ENCODE measurements at regions of chr20 and their contacts with region 1.

Region 1: DNA sequence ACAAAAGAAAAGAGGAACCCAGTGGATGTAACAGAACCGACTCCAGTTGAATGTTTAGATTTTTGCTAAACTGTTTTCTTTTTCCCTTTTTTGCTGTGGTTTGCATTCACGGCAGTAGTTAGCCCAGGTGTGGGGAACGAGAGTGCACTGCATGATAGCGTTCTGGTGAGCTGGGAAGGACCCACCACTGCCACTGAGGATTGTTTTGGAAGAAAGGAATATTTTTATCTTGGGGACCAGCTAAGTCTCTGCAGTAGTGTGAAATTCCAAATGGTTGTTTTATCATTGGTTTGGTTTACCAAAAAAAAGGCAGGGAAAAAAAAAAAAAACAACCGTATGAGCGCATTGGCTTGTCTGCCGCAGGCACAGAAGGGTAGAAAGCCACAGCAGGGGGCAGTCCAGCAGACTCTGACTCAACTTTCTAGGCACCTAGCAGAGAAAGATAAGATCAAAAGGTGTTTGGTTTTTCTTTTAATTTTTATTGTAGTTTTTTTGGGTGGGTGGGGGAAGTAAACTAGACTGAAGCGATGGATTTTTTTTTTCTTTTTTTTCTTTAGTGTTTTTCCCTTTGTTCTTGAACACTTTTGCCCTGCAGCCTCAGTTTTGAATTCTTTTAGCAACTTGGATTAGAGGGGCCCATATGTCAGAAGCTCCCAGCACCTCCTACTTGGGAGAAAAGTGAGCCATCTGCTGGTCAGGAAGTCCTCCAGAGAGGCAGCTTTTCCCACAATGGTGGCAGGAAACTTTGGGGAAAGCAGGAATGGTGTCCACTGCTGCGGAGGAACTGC is 13.5 kb upstream of the RAB5IF start:
- DNase-seq: peak in 4 of 5 donors; percentile 38 to 77 (median 48)
- H3K4me3 ChIP-seq: no peak overlapping the region
- H3K4me3 Mint-ChIP-seq: peak overlapping the region in 4 of 7 donors; percentile 25 to 66 (median 43)
- H3K27ac ChIP-seq: no peak overlapping the region
- H3K27ac Mint-ChIP-seq: peak overlapping the region; percentile 72 to 95 (median 89)
- H3K4me1 ChIP-seq: peaks cover 26% of the 10 kb centered on the region
- H3K4me1 Mint-ChIP-seq: peaks cover 32 to 59% (median 49%) of the 10 kb centered on the region in 3 donors
- H3K27me3 ChIP-seq: no peaks in the 10 kb centered on the region
- H3K27me3 Mint-ChIP-seq: no peaks in the 10 kb centered on the region

Region 2: DNA sequence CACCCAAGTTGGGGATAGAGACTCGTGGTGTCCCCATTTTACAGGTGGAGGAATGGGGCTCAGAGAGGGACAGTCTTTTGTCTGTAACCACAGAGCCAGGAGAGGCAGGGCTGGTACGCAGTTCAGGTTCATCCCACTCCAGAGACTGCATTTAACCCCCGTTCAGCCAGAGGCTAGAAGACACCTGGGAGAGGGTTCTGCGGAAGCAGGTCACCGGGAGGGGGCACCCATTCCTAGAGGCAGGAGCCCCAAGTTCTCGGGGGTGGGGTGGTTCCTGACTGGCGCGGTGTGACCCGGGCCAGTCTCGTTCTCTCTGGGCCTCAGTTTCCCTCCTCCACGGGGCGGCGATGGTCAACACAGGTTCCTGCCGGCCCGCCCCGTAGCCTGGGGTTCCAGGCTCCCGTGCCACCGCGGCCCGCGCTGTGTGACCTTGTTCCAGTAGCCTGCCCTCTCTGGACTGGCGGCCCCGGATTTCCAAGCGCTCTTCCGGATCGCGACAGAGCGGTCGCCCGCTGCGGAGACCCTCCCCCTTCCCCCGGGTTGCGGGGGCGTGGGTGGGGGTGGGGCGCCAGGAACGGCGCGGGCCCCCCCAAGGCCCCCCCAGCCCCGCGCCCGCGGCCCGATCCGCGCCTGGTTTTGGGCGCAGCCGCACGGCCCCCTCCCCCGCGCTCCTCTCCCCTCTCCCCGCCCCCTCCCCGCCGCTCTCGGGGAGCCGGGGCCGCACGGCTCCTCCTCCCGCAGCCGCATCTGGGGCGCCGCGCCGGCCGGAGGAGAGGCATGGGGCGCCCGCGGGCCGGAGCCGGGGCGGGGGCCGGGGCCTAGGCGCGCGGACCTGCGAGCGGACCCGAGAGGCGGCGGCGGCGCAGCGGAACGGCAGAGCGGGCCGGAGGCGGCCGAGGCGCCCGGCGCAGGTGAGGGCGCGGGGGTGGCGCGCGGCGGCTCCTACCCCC is 286.2 kb before region 1 on chr20 and contains the start of gene DLGAP4:
- CTCF ChIA-PET with region 1: no interaction called
- POLR2A ChIA-PET with region 1: no interaction called
- DNase-seq: no peak
- H3K4me3 ChIP-seq: no peak within 1 kb of the TSS
- H3K4me3 Mint-ChIP-seq: peak within 1 kb of the TSS in 6 of 7 donors; percentile 69 to 87 (median 80)
- H3K27ac ChIP-seq: no peak within 1 kb of the TSS
- H3K27ac Mint-ChIP-seq: peak within 1 kb of the TSS in 1 of 8 donors; percentile 81
- H3K4me1 ChIP-seq: peaks cover 5% of the 10 kb centered on the region
- H3K4me1 Mint-ChIP-seq: peaks cover 7 to 15% (median 10%) of the 10 kb centered on the region in 3 donors
- H3K27me3 ChIP-seq: peaks cover 29% of the 10 kb centered on the region
- H3K27me3 Mint-ChIP-seq: peaks cover 38 to 72% of the 10 kb centered on the region in 2 donors
- total RNA-seq, gene DLGAP4: 15.5 to 19.1 TPM

Region 3: DNA sequence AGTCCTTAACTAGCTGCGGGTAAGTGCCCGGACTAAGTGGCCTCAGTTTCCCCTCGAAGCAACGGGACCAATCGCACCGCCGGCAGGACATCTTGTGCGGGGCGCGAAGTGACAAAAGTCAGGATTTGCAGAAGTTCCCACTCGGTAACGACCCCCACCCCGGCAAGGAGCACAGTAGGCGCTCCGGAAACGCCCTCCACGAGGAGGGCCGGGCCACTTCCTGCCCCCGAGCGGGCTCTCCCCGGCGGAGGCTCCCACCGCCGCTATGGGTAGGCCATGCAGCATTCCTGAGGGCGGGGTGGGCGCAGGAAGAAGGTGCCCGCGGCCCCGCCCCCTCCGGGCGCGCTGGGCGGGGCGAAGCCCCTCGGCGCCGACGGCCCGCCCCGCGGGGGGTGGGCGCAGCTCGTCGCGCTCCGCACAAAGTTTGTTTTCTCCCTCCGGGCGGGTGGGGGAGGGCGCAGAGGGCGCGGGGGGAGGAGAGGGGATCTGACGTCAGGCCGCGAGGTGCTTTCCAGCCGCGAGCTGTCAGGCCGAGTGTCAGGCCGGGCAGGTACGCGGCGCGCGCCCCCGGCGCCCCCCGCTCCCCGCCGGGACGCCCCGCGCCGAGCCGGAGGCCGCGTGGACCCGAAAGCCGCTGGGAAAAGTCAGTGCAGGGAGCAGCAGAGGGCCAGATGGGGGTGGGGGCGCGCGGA is 18.8 kb before region 1 on chr20 and contains the start of gene TGIF2:
- CTCF ChIA-PET with region 1: interaction called, 20 read pairs
- POLR2A ChIA-PET with region 1: interaction called, 48 read pairs
- DNase-seq: peak; percentile 85 to 96 (median 93)
- H3K4me3 ChIP-seq: peak within 1 kb of the TSS; percentile 66
- H3K4me3 Mint-ChIP-seq: peak within 1 kb of the TSS; percentile 90 to 96 (median 93)
- H3K27ac ChIP-seq: peak within 1 kb of the TSS; percentile 91
- H3K27ac Mint-ChIP-seq: peak within 1 kb of the TSS; percentile 97 to 100 (median 98)
- H3K4me1 ChIP-seq: peaks cover 33% of the 10 kb centered on the region
- H3K4me1 Mint-ChIP-seq: peaks cover 30 to 40% (median 37%) of the 10 kb centered on the region in 3 donors
- H3K27me3 ChIP-seq: no peaks in the 10 kb centered on the region
- H3K27me3 Mint-ChIP-seq: peaks cover 0 to 3% of the 10 kb centered on the region in 2 donors
- total RNA-seq, gene TGIF2: 46.1 to 49.8 TPM

Region 4: GRCh38 chr20:36611625-36612024 is 19.6 kb after region 1 on chr20:
- CTCF ChIA-PET with region 1: interaction called, 59 read pairs
- POLR2A ChIA-PET with region 1: interaction called, 3 read pairs
- DNase-seq: no peak
- H3K4me3 ChIP-seq: no peak overlapping the region
- H3K4me3 Mint-ChIP-seq: no peak overlapping the region
- H3K27ac ChIP-seq: no peak overlapping the region
- H3K27ac Mint-ChIP-seq: peak overlapping the region in 3 of 8 donors; percentile 23 to 75 (median 50)
- H3K4me1 ChIP-seq: peaks cover 17% of the 10 kb centered on the region
- H3K4me1 Mint-ChIP-seq: peaks cover 21 to 62% (median 25%) of the 10 kb centered on the region in 3 donors
- H3K27me3 ChIP-seq: no peaks in the 10 kb centered on the region
- H3K27me3 Mint-ChIP-seq: peaks cover 0 to 2% of the 10 kb centered on the region in 2 donors

Region 5: GRCh38 chr20:36768768-36769430 is 176.9 kb after region 1 on chr20:
- CTCF ChIA-PET with region 1: no interaction called
- POLR2A ChIA-PET with region 1: interaction called, 13 read pairs
- DNase-seq: no peak
- H3K4me3 ChIP-seq: no peak overlapping the region
- H3K4me3 Mint-ChIP-seq: peak overlapping the region in 1 of 7 donors; percentile 35
- H3K27ac ChIP-seq: no peak overlapping the region
- H3K27ac Mint-ChIP-seq: peak overlapping the region in 1 of 8 donors; percentile 32
- H3K4me1 ChIP-seq: peaks cover 7% of the 10 kb centered on the region
- H3K4me1 Mint-ChIP-seq: peaks cover 12 to 36% (median 23%) of the 10 kb centered on the region in 3 donors
- H3K27me3 ChIP-seq: no peaks in the 10 kb centered on the region
- H3K27me3 Mint-ChIP-seq: peaks cover 0 to 3% of the 10 kb centered on the region in 2 donors

Measured in CD8-positive, alpha-beta memory T cell (primary cell).